Uterus (tissue), 4 donors: ENCODE measurements at regions of chr20 and their contacts with region 1.

Region 1: GRCh38 chr20:57596998-57597939 is 23.0 kb downstream of the ZBP1 start:
- DNase-seq: peak; percentile 62 to 72
- H3K4me3 ChIP-seq: no peak overlapping the region
- H3K27ac ChIP-seq: no peak overlapping the region
- H3K4me1 ChIP-seq: no peaks in the 10 kb centered on the region
- H3K27me3 ChIP-seq: no peaks in the 10 kb centered on the region
- CTCF ChIP-seq: peak; percentile 92 to 97 (median 97)
- POLR2A ChIP-seq: no peak

Region 2: GRCh38 chr20:57514273-57514751 is 83.0 kb before region 1 on chr20:
- intact Hi-C with region 1: loop called (anchors 5 kb)
- DNase-seq: peak; percentile 71 to 78
- H3K4me3 ChIP-seq: no peak overlapping the region
- H3K27ac ChIP-seq: no peak overlapping the region
- H3K4me1 ChIP-seq: no peaks in the 10 kb centered on the region
- H3K27me3 ChIP-seq: no peaks in the 10 kb centered on the region
- CTCF ChIP-seq: peak; percentile 79 to 92 (median 88)
- POLR2A ChIP-seq: no peak

Region 3: GRCh38 chr20:58209652-58210397 is 612.6 kb after region 1 on chr20:
- intact Hi-C with region 1: loop called (anchors 2 kb)
- DNase-seq: peak; percentile 77 to 85
- H3K4me3 ChIP-seq: no peak overlapping the region
- H3K27ac ChIP-seq: no peak overlapping the region
- H3K4me1 ChIP-seq: no peaks in the 10 kb centered on the region
- H3K27me3 ChIP-seq: no peaks in the 10 kb centered on the region
- CTCF ChIP-seq: peak; percentile 100
- POLR2A ChIP-seq: no peak